ENCODE measurements at regions of chr2 and their contacts with region 1.

Region 1: GRCh38 chr2:6352906-6353515 is 512.7 kb downstream of the CMPK2 start:
- DNase-seq: no peak
- ATAC-seq: peak; percentile 70
- H3K4me3 ChIP-seq: no peak overlapping the region
- H3K27ac ChIP-seq: no peak overlapping the region
- H3K4me1 ChIP-seq: no peaks in the 10 kb centered on the region
- H3K27me3 ChIP-seq: no peaks in the 10 kb centered on the region
- CTCF ChIP-seq: peak; percentile 36 to 56 (median 46); a peak in 5 of 6 replicates
- POLR2A ChIP-seq: no peak
- RAD21 ChIP-seq: peak; percentile 57

Region 2: DNA sequence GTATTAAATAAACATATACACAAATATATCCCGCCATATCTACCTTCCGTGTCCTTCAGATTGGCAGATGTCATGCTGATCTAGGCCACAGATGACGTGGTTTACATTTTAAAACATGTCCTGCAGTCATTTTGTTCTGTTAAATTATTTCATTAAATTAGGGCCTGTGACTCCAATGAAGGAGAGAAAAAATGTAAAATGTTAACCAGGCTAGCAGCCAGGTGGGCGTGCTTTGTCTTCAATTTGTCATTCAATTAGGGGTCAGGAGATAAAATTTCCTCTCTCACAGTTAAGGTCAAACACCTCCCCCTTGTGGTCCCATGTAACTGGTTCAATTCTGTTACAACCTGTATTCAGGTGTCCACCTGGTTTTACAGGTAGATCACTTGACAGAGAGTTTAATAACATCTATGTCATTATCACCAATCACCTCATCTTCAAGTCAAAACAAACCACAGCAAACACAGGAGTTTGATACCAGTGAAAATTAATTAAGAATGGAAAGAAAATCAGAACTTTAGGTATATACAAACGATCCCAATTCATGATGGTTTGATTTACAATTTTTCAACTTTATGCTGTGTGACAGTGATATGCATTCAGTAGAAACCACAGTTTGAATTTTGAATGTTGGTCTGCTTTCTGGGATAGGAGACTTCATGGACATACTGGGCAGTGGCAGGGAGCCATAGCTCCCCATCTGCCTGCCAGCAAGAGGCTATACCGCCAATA is 173.2 kb after region 1 on chr2:
- CTCF ChIA-PET with region 1: no interaction called
- POLR2A ChIA-PET with region 1: no interaction called
- RAD21 ChIA-PET with region 1: no interaction called
- intact Hi-C with region 1: loop called (anchors 5 kb)
- DNase-seq: peak; percentile 13
- ATAC-seq: peak; percentile 42; the same call in 1 of the 2 replicates
- H3K4me3 ChIP-seq: no peak overlapping the region
- H3K27ac ChIP-seq: no peak overlapping the region
- H3K4me1 ChIP-seq: no peaks in the 10 kb centered on the region
- H3K27me3 ChIP-seq: no peaks in the 10 kb centered on the region
- CTCF ChIP-seq: peak; percentile 17 to 55 (median 28); a peak in 3 of 6 replicates
- POLR2A ChIP-seq: no peak
- RAD21 ChIP-seq: peak; percentile 47

Region 3: GRCh38 chr2:6773007-6773693 is 420.1 kb after region 1 on chr2:
- CTCF ChIA-PET with region 1: no interaction called
- POLR2A ChIA-PET with region 1: no interaction called
- RAD21 ChIA-PET with region 1: no interaction called
- intact Hi-C with region 1: loop called (anchors 5 kb)
- DNase-seq: peak; percentile 26
- ATAC-seq: peak; percentile 94
- H3K4me3 ChIP-seq: no peak overlapping the region
- H3K27ac ChIP-seq: no peak overlapping the region
- H3K4me1 ChIP-seq: no peaks in the 10 kb centered on the region
- H3K27me3 ChIP-seq: peaks cover 13% of the 10 kb centered on the region; the same call in 1 of the 2 replicates
- CTCF ChIP-seq: peak; percentile 56 to 97 (median 89)
- POLR2A ChIP-seq: no peak
- RAD21 ChIP-seq: peak; percentile 91

Measured in HCT116 (cell line).